B cell (primary cell): ENCODE measurements at regions of chr9 and their contacts with region 1.

Region 1: DNA sequence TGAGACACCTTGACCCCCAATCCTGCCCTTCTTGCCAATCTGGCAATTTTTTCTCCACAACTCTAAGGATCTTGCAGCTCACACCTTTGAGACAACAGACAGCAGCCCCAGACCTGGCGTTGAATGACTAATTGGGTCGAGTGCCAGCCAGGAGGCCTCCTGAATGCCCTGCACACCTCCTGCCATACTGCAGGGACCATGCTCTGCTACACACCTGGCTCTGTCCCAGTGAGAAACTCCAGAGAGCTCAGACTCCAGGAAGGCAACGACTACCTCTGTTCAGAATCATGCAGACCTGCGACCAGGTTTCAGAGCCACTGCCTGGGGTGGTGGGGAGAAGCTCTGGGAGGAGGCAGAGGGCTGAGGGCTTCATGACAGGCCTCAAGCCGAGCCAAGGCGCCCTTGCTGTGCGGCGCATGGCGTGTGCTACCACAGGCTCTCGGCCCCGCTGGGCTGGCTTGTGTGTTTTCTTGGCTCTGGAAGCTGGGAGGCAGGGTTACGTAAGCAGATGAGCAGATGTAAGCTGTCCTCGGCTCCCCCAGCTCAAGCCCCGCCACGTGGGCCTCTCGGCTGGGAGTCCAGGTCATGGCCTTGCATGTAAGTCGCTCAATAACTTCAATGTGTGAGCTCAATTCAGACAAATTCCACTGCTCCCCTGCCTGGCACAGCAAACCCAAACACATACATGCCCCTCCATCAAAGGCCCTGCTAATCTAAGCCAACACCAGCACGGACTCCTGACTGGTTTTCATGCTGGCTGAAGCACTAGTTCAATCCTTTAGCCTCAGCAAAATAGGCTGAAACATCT is 27.5 kb downstream of the B4GALT1 start:
- DNase-seq: no peak
- ATAC-seq: no peak
- H3K4me3 ChIP-seq: peak overlapping the region in 1 of 5 experiments; percentile 13
- H3K4me3 Mint-ChIP-seq: peak overlapping the region; percentile 77
- H3K27ac ChIP-seq: peak overlapping the region; percentile 87
- H3K27ac Mint-ChIP-seq: peak overlapping the region; percentile 93
- H3K4me1 ChIP-seq: peaks cover 99 to 100% of the 10 kb centered on the region in 2 donors
- H3K4me1 Mint-ChIP-seq: peaks cover 96% of the 10 kb centered on the region
- H3K27me3 ChIP-seq: no peaks in the 10 kb centered on the region
- H3K27me3 Mint-ChIP-seq: no peaks in the 10 kb centered on the region
- CTCF ChIP-seq: no peak

Region 2: DNA sequence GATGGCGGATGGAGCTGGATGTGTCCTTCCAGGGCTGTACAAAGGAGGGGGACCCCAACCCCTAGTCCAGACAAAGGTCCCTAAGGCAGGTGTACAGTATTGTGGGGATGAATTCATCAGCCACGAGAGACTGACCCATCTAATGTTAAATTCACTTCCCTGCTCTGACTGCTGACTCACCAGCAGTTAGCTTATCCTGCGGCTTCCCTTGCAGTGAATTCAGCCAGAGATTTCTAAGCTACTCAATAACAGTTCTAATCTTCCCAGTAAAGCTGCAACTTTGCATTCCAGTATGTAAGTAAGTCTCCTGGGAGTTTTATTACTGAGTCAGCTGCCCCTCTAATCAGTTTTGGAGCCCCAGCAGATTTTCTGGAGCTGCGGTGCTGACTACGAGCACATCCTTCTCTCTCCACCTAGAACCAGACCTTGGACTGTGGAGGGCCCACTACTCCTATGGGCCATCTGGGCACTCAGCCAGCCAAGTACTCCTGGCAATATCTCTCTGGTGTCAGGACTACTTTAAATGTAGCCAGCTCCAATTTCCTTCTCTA is 11.5 kb after region 1 on chr9:
- CTCF ChIA-PET with region 1: interaction called, 15 read pairs
- POLR2A ChIA-PET with region 1: interaction called, 11 read pairs
- intact Hi-C with region 1: loop called (anchors 1 kb)
- DNase-seq: no peak
- ATAC-seq: no peak
- H3K4me3 ChIP-seq: peak overlapping the region in 2 of 5 experiments; percentile 12 to 26
- H3K4me3 Mint-ChIP-seq: peak overlapping the region; percentile 29
- H3K27ac ChIP-seq: peak overlapping the region; percentile 42 to 92
- H3K27ac Mint-ChIP-seq: peak overlapping the region; percentile 60
- H3K4me1 ChIP-seq: peaks cover 86 to 91% of the 10 kb centered on the region in 2 donors
- H3K4me1 Mint-ChIP-seq: peaks cover 85% of the 10 kb centered on the region
- H3K27me3 ChIP-seq: no peaks in the 10 kb centered on the region
- H3K27me3 Mint-ChIP-seq: no peaks in the 10 kb centered on the region
- CTCF ChIP-seq: no peak

Region 3: DNA sequence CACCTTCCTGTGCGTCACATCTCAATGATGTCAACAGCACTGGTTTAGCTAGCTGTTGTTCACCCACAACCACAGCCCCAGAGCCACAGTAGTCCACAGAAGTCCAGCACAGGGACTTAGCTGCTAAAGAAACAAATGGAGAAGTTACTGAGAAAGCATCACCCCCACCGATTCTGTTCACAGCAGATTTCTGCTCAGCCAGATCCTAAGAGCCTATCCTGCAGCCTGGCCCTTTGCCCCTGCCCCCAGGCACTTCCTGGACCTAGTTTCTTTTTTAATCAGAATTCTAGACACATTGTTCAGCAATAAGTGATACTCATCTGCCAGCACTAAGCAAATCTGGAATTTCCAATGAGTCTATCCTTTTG is 20.1 kb after region 1 on chr9:
- CTCF ChIA-PET with region 1: interaction called, 15 read pairs
- POLR2A ChIA-PET with region 1: interaction called, 44 read pairs
- intact Hi-C with region 1: loop called (anchors 1 kb)
- DNase-seq: peak; percentile 81
- ATAC-seq: peak; percentile 53
- H3K4me3 ChIP-seq: peak overlapping the region in 3 of 5 experiments; percentile 23 to 59 (median 35)
- H3K4me3 Mint-ChIP-seq: peak overlapping the region; percentile 95
- H3K27ac ChIP-seq: peak overlapping the region; percentile 92 to 95
- H3K27ac Mint-ChIP-seq: peak overlapping the region; percentile 93
- H3K4me1 ChIP-seq: peaks cover 98 to 99% of the 10 kb centered on the region in 2 donors
- H3K4me1 Mint-ChIP-seq: peaks cover 96% of the 10 kb centered on the region
- H3K27me3 ChIP-seq: no peaks in the 10 kb centered on the region
- H3K27me3 Mint-ChIP-seq: no peaks in the 10 kb centered on the region
- CTCF ChIP-seq: no peak